CD8-positive, alpha-beta T cell (primary cell): ENCODE measurements at regions of chr5 and their contacts with region 1.

Region 1: GRCh38 chr5:157265714-157266285 is at the start of gene CYFIP2:
- DNase-seq: peak; percentile 74 to 94 (median 86)
- ATAC-seq: peak; percentile 82
- H3K4me3 ChIP-seq: peak within 1 kb of the TSS; percentile 69 to 77
- H3K4me3 Mint-ChIP-seq: peak within 1 kb of the TSS; percentile 95
- H3K27ac ChIP-seq: peak within 1 kb of the TSS; percentile 81 to 82
- H3K27ac Mint-ChIP-seq: peak within 1 kb of the TSS; percentile 99
- H3K4me1 ChIP-seq: peaks cover 69% of the 10 kb centered on the region
- H3K4me1 Mint-ChIP-seq: peaks cover 73% of the 10 kb centered on the region
- H3K27me3 ChIP-seq: no peaks in the 10 kb centered on the region
- H3K27me3 Mint-ChIP-seq: no peaks in the 10 kb centered on the region
- CTCF ChIP-seq: no peak
- total RNA-seq, gene CYFIP2: 270 to 304 TPM

Region 2: DNA sequence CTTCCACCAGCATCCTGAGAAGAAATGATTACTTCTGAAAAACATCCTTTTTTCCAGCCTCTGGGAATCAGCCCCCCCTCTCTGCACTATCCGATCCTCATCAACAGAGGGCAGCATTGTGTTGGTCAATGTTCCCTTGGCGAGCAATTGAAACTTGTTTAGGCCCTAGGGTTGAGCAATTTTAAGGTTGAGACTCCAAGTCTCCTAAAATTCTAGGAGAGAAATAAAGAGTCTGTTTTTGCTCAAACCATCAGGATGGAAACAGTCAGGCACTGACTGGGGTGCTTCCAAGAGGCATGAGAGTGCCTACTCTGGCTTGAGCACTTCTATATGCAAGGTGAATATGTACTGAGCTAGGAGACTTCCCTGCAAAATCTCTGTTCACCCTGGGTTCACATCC is 12.3 kb before region 1 on chr5:
- CTCF ChIA-PET with region 1: interaction called, 57 read pairs
- POLR2A ChIA-PET with region 1: interaction called, 44 read pairs
- intact Hi-C with region 1: loop called (anchors 1 kb)
- DNase-seq: peak in 1 of 9 experiments; percentile 29
- ATAC-seq: no peak
- H3K4me3 ChIP-seq: no peak overlapping the region
- H3K4me3 Mint-ChIP-seq: peak overlapping the region; percentile 61
- H3K27ac ChIP-seq: peak overlapping the region; percentile 61 to 72
- H3K27ac Mint-ChIP-seq: peak overlapping the region; percentile 92
- H3K4me1 ChIP-seq: peaks cover 97% of the 10 kb centered on the region
- H3K4me1 Mint-ChIP-seq: peaks cover 93% of the 10 kb centered on the region
- H3K27me3 ChIP-seq: no peaks in the 10 kb centered on the region
- H3K27me3 Mint-ChIP-seq: no peaks in the 10 kb centered on the region
- CTCF ChIP-seq: peak; percentile 54

Region 3: DNA sequence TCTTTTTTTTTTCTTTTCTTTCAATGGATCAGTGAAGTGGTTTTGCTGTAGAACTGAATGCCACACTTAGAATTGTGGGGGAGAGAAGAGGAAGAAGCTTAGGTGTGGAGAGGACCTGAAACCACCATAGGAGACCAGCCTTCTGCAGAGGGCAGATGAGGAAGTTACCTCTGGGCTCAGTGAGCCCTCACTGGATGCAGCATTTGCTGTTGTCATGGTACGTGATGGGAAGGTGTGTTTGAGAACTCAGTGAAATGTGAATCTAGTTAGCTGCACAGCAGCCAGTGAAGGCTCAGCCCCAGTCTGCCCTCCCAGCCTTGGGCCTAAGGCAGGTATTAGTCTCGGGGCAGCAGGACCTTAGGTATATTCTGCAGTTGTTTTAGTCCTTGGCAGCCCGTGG is 17.6 kb after region 1 on chr5:
- CTCF ChIA-PET with region 1: interaction called, 3 read pairs
- POLR2A ChIA-PET with region 1: interaction called, 6 read pairs
- intact Hi-C with region 1: loop called in 1 of 2 experiments (anchors 2 kb)
- DNase-seq: peak in 5 of 9 experiments; percentile 34 to 68 (median 48)
- ATAC-seq: peak; percentile 86
- H3K4me3 ChIP-seq: no peak overlapping the region
- H3K4me3 Mint-ChIP-seq: peak overlapping the region; percentile 58
- H3K27ac ChIP-seq: peak overlapping the region; percentile 16 to 55
- H3K27ac Mint-ChIP-seq: peak overlapping the region; percentile 95
- H3K4me1 ChIP-seq: peaks cover 90% of the 10 kb centered on the region
- H3K4me1 Mint-ChIP-seq: peaks cover 86% of the 10 kb centered on the region
- H3K27me3 ChIP-seq: no peaks in the 10 kb centered on the region
- H3K27me3 Mint-ChIP-seq: no peaks in the 10 kb centered on the region
- CTCF ChIP-seq: no peak

Region 4: GRCh38 chr5:157303667-157304327 is 38.0 kb after region 1 on chr5:
- CTCF ChIA-PET with region 1: interaction called, 5 read pairs
- POLR2A ChIA-PET with region 1: interaction called, 4 read pairs
- intact Hi-C with region 1: loop called in 1 of 2 experiments (anchors 2 kb)
- DNase-seq: peak; percentile 37 to 77 (median 61)
- ATAC-seq: peak; percentile 68
- H3K4me3 ChIP-seq: peak overlapping the region; percentile 6 to 23
- H3K4me3 Mint-ChIP-seq: peak overlapping the region; percentile 64
- H3K27ac ChIP-seq: peak overlapping the region; percentile 17 to 61
- H3K27ac Mint-ChIP-seq: peak overlapping the region; percentile 95
- H3K4me1 ChIP-seq: peaks cover 66% of the 10 kb centered on the region
- H3K4me1 Mint-ChIP-seq: peaks cover 64% of the 10 kb centered on the region
- H3K27me3 ChIP-seq: no peaks in the 10 kb centered on the region
- H3K27me3 Mint-ChIP-seq: no peaks in the 10 kb centered on the region
- CTCF ChIP-seq: peak; percentile 53

Region 5: DNA sequence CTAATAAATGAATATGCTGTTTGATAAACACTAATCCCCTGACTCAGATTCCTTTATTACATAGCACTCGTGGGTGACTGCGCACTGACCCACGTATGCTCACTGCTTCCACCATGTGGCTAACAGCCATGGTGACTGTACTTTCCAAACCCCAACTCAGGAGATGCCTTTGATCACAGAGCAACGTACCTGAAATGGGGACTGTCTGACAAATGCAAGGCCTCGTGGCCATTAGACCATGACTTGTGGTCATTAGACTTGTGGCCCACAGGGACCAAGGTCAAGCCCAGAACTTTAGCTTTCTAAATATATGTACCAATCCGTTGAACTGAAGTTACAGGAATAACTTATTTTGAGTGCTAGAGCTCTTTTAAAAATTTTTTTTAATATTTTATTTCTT is 46.7 kb after region 1 on chr5:
- CTCF ChIA-PET with region 1: interaction called, 5 read pairs
- POLR2A ChIA-PET with region 1: interaction called, 3 read pairs
- intact Hi-C with region 1: loop called in 1 of 2 experiments (anchors 1 kb)
- DNase-seq: peak; percentile 24 to 87 (median 66)
- ATAC-seq: peak; percentile 95
- H3K4me3 ChIP-seq: no peak overlapping the region
- H3K4me3 Mint-ChIP-seq: no peak overlapping the region
- H3K27ac ChIP-seq: peak overlapping the region in 1 of 2 experiments; percentile 11
- H3K27ac Mint-ChIP-seq: peak overlapping the region; percentile 81
- H3K4me1 ChIP-seq: peaks cover 37% of the 10 kb centered on the region
- H3K4me1 Mint-ChIP-seq: peaks cover 38% of the 10 kb centered on the region
- H3K27me3 ChIP-seq: no peaks in the 10 kb centered on the region
- H3K27me3 Mint-ChIP-seq: no peaks in the 10 kb centered on the region
- CTCF ChIP-seq: peak; percentile 62

Region 6: GRCh38 chr5:157603333-157604190 is 337.8 kb after region 1 on chr5:
- CTCF ChIA-PET with region 1: no interaction called
- POLR2A ChIA-PET with region 1: no interaction called
- intact Hi-C with region 1: no loop called
- DNase-seq: peak; percentile 3 to 77 (median 54)
- ATAC-seq: peak; percentile 70
- H3K4me3 ChIP-seq: no peak overlapping the region
- H3K4me3 Mint-ChIP-seq: peak overlapping the region; percentile 6
- H3K27ac ChIP-seq: peak overlapping the region in 1 of 2 experiments; percentile 34
- H3K27ac Mint-ChIP-seq: peak overlapping the region; percentile 80
- H3K4me1 ChIP-seq: peaks cover 7% of the 10 kb centered on the region
- H3K4me1 Mint-ChIP-seq: peaks cover 38% of the 10 kb centered on the region
- H3K27me3 ChIP-seq: no peaks in the 10 kb centered on the region
- H3K27me3 Mint-ChIP-seq: no peaks in the 10 kb centered on the region
- CTCF ChIP-seq: no peak

Region 7: DNA sequence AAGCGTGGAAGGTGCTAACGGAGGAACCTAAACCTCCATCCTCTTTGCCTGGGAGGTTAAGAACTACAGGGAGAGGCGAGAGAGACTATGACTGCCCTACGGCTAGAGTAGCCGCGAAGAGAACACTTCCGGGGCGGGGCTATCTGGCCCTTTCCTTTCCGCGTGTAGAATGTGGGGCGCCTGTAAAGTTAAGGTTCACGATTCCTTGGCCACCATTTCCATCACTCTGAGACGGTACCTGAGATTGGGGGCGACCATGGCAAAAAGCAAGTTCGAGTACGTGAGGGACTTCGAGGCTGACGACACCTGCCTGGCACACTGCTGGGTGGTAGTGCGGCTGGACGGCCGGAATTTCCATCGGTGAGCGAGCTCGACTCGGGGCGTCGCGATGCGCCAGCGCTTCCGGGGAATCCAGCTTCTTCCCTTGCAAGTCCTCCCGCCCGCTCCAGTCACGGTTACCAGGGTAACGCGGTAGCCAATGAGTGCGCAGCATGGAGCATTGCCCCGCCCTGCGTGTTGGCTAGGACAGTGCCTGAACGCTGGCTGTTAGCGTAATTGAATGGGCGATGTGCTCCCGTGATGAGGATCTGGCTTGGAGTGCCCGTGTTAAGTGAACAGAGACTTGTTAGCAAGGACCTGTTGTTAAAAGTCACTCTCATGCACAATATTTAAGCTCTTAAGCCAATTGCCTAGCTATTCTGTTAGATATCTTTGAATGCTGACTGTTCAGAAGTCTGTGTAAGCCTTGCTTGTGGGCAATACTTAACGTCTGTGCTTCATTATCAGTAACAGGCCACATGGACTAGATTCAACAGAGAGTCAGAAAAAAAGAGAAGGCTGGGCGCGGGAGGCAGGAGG is 465.7 kb after region 1 on chr5 and contains the start of gene THG1L:
- CTCF ChIA-PET with region 1: no interaction called
- POLR2A ChIA-PET with region 1: no interaction called
- intact Hi-C with region 1: loop called (anchors 10 kb)
- DNase-seq: peak; percentile 95 to 99 (median 97)
- ATAC-seq: peak; percentile 94
- H3K4me3 ChIP-seq: peak within 1 kb of the TSS; percentile 75 to 82
- H3K4me3 Mint-ChIP-seq: peak within 1 kb of the TSS; percentile 96
- H3K27ac ChIP-seq: peak within 1 kb of the TSS; percentile 68 to 86
- H3K27ac Mint-ChIP-seq: peak within 1 kb of the TSS; percentile 95
- H3K4me1 ChIP-seq: no peaks in the 10 kb centered on the region
- H3K4me1 Mint-ChIP-seq: peaks cover 14% of the 10 kb centered on the region
- H3K27me3 ChIP-seq: no peaks in the 10 kb centered on the region
- H3K27me3 Mint-ChIP-seq: no peaks in the 10 kb centered on the region
- CTCF ChIP-seq: no peak
- total RNA-seq, gene THG1L: 6.9 to 7.1 TPM